ENCODE measurements at regions of chr1 and their contacts with region 1.

Region 1: GRCh38 chr1:12619792-12620487 is 1.9 kb upstream of the DHRS3 start:
- DNase-seq: peak; percentile 83 to 87
- H3K4me3 ChIP-seq: peak overlapping the region; percentile 89
- H3K4me3 Mint-ChIP-seq: peak overlapping the region; percentile 93
- H3K27ac Mint-ChIP-seq: peak overlapping the region; percentile 96
- H3K4me1 ChIP-seq: peaks cover 4% of the 10 kb centered on the region; the same call in 1 of the 2 replicates
- H3K4me1 Mint-ChIP-seq: peaks cover 2% of the 10 kb centered on the region
- H3K27me3 ChIP-seq: no peaks in the 10 kb centered on the region
- H3K27me3 Mint-ChIP-seq: no peaks in the 10 kb centered on the region
- CTCF ChIP-seq: peak; percentile 86 to 94

Region 2: GRCh38 chr1:12272770-12273169 is 347.2 kb before region 1 on chr1:
- CTCF ChIA-PET with region 1: interaction called, 3 read pairs
- POLR2A ChIA-PET with region 1: no interaction called
- intact Hi-C with region 1: loop called (anchors 1 kb)
- DNase-seq: no peak
- H3K4me3 ChIP-seq: no peak overlapping the region
- H3K4me3 Mint-ChIP-seq: no peak overlapping the region
- H3K27ac Mint-ChIP-seq: no peak overlapping the region
- H3K4me1 ChIP-seq: no peaks in the 10 kb centered on the region
- H3K4me1 Mint-ChIP-seq: no peaks in the 10 kb centered on the region
- H3K27me3 ChIP-seq: no peaks in the 10 kb centered on the region
- H3K27me3 Mint-ChIP-seq: no peaks in the 10 kb centered on the region
- CTCF ChIP-seq: no peak

Region 3: DNA sequence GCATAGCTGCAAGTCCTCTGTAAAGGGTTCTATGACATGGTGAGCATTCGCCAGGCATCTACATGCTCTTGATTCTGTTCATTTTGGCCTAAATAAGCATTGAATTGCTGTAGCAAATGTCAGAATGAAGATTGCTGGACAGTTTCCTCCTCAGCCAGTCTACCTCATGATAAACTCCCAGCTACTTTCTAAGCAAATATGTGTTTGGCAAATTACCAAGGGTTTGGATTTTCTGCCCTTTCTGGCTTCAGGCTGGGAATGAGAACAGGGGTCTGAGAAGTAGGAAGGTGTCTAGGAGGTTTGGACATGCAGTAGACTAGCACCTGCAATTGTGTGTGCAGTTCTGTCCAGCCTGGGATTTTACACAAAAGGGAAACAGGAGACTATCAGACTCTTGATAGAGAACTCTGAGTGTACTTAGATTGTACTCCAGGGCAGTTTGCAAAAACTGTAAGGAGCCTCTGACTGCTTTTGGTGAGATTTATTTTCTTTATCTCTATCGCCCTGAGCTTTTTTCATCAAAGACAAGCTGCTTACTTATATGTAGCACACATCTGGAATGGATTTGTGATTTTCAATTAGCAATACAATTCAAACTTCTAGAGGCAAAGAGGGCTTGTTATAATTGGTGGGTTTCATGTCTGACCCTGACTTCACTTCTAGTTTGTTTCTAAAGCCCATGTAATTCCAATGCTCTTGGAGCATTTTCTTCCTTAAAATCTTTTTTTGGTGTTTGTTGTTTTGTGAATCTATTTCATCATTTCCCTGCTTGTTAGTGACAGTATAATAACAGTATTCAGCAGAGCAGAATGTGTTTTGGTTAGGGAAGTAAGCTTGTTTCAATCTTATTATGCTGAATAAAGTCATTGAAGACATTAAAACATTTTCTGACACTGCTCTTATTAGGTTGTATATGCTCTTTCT is 239.4 kb before region 1 on chr1:
- CTCF ChIA-PET with region 1: interaction called, 4 read pairs
- POLR2A ChIA-PET with region 1: interaction called, 7 read pairs
- intact Hi-C with region 1: loop called (anchors 1 kb)
- DNase-seq: no peak
- H3K4me3 ChIP-seq: no peak overlapping the region
- H3K4me3 Mint-ChIP-seq: peak overlapping the region; percentile 34
- H3K27ac Mint-ChIP-seq: peak overlapping the region; percentile 86
- H3K4me1 ChIP-seq: peaks cover 37% of the 10 kb centered on the region
- H3K4me1 Mint-ChIP-seq: peaks cover 27% of the 10 kb centered on the region
- H3K27me3 ChIP-seq: no peaks in the 10 kb centered on the region
- H3K27me3 Mint-ChIP-seq: no peaks in the 10 kb centered on the region
- CTCF ChIP-seq: no peak

Region 4: GRCh38 chr1:12464598-12465056 is 155.3 kb before region 1 on chr1:
- CTCF ChIA-PET with region 1: no interaction called
- POLR2A ChIA-PET with region 1: interaction called, 3 read pairs
- intact Hi-C with region 1: loop called (anchors 5 kb)
- DNase-seq: no peak
- H3K4me3 ChIP-seq: no peak overlapping the region
- H3K4me3 Mint-ChIP-seq: peak overlapping the region; percentile 43
- H3K27ac Mint-ChIP-seq: peak overlapping the region; percentile 75
- H3K4me1 ChIP-seq: peaks cover 38% of the 10 kb centered on the region
- H3K4me1 Mint-ChIP-seq: peaks cover 39% of the 10 kb centered on the region
- H3K27me3 ChIP-seq: no peaks in the 10 kb centered on the region
- H3K27me3 Mint-ChIP-seq: no peaks in the 10 kb centered on the region
- CTCF ChIP-seq: no peak

Region 5: GRCh38 chr1:12528021-12528852 is 91.7 kb before region 1 on chr1:
- CTCF ChIA-PET with region 1: no interaction called
- POLR2A ChIA-PET with region 1: no interaction called
- intact Hi-C with region 1: loop called (anchors 5 kb)
- DNase-seq: peak; percentile 70 to 78
- H3K4me3 ChIP-seq: no peak overlapping the region
- H3K4me3 Mint-ChIP-seq: peak overlapping the region; percentile 11
- H3K27ac Mint-ChIP-seq: no peak overlapping the region
- H3K4me1 ChIP-seq: peaks cover 30% of the 10 kb centered on the region
- H3K4me1 Mint-ChIP-seq: peaks cover 29% of the 10 kb centered on the region
- H3K27me3 ChIP-seq: no peaks in the 10 kb centered on the region
- H3K27me3 Mint-ChIP-seq: no peaks in the 10 kb centered on the region
- CTCF ChIP-seq: no peak

Region 6: GRCh38 chr1:12636098-12636950 is 16.4 kb after region 1 on chr1:
- CTCF ChIA-PET with region 1: no interaction called
- POLR2A ChIA-PET with region 1: no interaction called
- intact Hi-C with region 1: no loop called
- DNase-seq: peak; percentile 16 to 51
- H3K4me3 ChIP-seq: no peak overlapping the region
- H3K4me3 Mint-ChIP-seq: no peak overlapping the region
- H3K27ac Mint-ChIP-seq: no peak overlapping the region
- H3K4me1 ChIP-seq: peaks cover 8% of the 10 kb centered on the region
- H3K4me1 Mint-ChIP-seq: no peaks in the 10 kb centered on the region
- H3K27me3 ChIP-seq: no peaks in the 10 kb centered on the region
- H3K27me3 Mint-ChIP-seq: no peaks in the 10 kb centered on the region
- CTCF ChIP-seq: no peak

Region 7: DNA sequence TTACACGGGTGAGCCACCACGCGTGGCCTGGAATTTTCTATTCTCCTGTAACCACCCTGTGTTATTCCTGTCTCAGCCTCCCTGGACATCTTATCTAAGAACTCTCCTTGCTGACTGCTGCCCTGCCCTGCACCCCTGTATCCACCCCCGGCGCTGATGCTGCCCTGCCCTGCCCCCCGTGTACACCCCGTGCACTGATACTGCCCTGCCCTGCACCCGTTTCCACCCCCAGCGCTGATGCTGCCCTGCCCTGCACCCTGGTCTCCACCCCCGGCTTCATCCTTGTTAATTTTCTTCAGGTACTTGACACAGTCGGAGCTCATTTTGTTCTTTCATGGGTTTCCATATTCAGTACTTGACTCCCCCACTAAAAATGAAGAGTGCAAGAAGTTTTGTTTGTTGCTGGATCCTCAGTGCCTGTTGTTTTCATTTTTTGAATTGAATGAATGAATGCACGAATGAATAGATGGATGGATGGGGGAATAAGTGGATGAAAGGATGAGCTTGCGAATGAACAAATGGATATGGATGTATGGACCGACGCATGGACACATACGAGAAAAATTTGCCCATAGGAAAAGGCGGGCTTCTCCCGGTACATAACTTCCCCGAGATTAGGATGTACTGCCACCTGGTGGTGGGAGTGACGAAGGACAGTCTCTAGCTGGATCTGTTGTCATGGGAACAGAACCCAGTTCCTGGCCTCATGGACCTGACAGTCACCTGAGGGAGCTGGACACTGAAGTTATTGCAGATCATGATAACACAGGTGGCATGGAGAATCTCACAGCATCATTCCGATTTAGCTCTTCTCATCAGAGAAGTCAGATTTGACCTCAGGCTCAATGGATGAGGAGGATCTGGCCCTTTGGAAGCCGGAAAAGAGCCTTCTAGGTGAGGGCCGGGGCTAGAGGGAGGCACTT is 38.9 kb after region 1 on chr1:
- CTCF ChIA-PET with region 1: interaction called, 3 read pairs
- POLR2A ChIA-PET with region 1: no interaction called
- intact Hi-C with region 1: loop called (anchors 2 kb)
- DNase-seq: peak; percentile 74 to 80
- H3K4me3 ChIP-seq: no peak overlapping the region
- H3K4me3 Mint-ChIP-seq: no peak overlapping the region
- H3K27ac Mint-ChIP-seq: no peak overlapping the region
- H3K4me1 ChIP-seq: peaks cover 15% of the 10 kb centered on the region
- H3K4me1 Mint-ChIP-seq: peaks cover 7% of the 10 kb centered on the region
- H3K27me3 ChIP-seq: no peaks in the 10 kb centered on the region
- H3K27me3 Mint-ChIP-seq: no peaks in the 10 kb centered on the region
- CTCF ChIP-seq: peak; percentile 82 to 88

Measured in Caco-2 (cell line).